Natural killer cell (primary cell): ENCODE measurements at regions of chr12 and their contacts with region 1.

Region 1: GRCh38 chr12:39372929-39373328 is 70.0 kb downstream of the KIF21A start:
- DNase-seq: peak; percentile 17 to 55
- ATAC-seq: peak; percentile 94 to 98 (median 98)
- H3K4me3 ChIP-seq: no peak overlapping the region
- H3K4me3 Mint-ChIP-seq: peak overlapping the region; percentile 86
- H3K27ac ChIP-seq: peak overlapping the region; percentile 71
- H3K27ac Mint-ChIP-seq: peak overlapping the region; percentile 85 to 91
- H3K4me1 ChIP-seq: peaks cover 10% of the 10 kb centered on the region
- H3K4me1 Mint-ChIP-seq: peaks cover 51 to 62% of the 10 kb centered on the region in 2 donors
- H3K27me3 ChIP-seq: no peaks in the 10 kb centered on the region
- H3K27me3 Mint-ChIP-seq: no peaks in the 10 kb centered on the region
- CTCF ChIP-seq: no peak

Region 2: DNA sequence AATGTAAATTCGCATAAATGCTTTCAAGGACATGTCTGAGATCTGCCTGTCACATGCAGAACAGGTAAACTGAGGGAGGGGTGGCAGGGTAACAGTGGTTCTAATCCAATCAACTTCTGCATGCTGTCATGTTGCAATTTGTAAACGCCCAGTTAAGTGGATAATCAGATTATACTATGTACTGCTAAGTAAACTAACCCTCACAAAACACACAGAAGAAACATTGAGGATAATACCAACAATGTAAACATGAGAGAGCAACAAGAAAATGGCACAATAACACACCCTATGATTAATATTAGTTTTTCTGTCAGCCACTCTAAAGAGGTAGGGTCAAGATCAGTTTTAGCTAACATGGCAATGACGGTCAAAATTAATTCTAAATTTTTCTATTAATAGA is 53.7 kb before region 1 on chr12:
- intact Hi-C with region 1: loop called (anchors 2 kb)
- DNase-seq: no peak
- ATAC-seq: no peak
- H3K4me3 ChIP-seq: no peak overlapping the region
- H3K4me3 Mint-ChIP-seq: no peak overlapping the region
- H3K27ac ChIP-seq: no peak overlapping the region
- H3K27ac Mint-ChIP-seq: no peak overlapping the region
- H3K4me1 ChIP-seq: no peaks in the 10 kb centered on the region
- H3K4me1 Mint-ChIP-seq: peaks cover 0 to 5% of the 10 kb centered on the region in 2 donors
- H3K27me3 ChIP-seq: no peaks in the 10 kb centered on the region
- H3K27me3 Mint-ChIP-seq: no peaks in the 10 kb centered on the region
- CTCF ChIP-seq: no peak

Region 3: DNA sequence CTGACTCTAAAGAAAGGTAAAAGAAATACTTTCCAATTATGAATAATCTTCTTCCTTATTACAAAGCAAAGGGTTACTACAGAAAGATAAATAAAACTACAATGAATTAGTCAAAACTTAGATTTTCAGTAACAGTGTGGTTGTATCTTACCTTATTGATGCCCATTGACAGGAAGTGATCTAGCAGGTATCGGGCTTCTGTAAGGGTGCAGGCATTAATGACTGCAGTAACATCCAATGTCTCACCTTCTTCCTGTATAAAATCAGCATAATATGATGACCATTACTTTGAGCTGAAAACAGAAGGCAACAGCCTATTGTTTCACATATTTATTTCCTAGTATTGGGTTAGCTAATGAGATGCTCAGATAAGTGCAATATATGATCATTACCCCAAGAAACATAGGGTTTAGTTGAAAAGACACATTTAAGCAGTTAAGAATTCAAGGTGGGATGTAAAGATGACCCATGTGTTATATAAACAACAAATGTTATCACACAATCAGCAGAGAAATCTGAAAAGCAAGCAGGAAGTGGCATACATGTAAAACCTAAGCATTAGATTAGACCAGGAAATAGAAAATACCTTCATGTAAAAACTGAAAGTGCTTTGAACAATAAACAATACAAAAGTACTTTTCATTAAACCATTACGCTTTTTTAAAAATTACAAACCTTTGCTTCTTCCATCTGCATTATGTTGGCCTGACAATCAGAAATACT is 41.2 kb before region 1 on chr12:
- intact Hi-C with region 1: loop called (anchors 5 kb)
- DNase-seq: peak in 1 of 2 donors; percentile 43
- ATAC-seq: peak; percentile 71 to 80 (median 78)
- H3K4me3 ChIP-seq: peak overlapping the region; percentile 8
- H3K4me3 Mint-ChIP-seq: peak overlapping the region; percentile 80
- H3K27ac ChIP-seq: peak overlapping the region; percentile 64
- H3K27ac Mint-ChIP-seq: peak overlapping the region; percentile 86 to 90
- H3K4me1 ChIP-seq: peaks cover 7% of the 10 kb centered on the region
- H3K4me1 Mint-ChIP-seq: peaks cover 23 to 29% of the 10 kb centered on the region in 2 donors
- H3K27me3 ChIP-seq: no peaks in the 10 kb centered on the region
- H3K27me3 Mint-ChIP-seq: no peaks in the 10 kb centered on the region
- CTCF ChIP-seq: no peak

Region 4: DNA sequence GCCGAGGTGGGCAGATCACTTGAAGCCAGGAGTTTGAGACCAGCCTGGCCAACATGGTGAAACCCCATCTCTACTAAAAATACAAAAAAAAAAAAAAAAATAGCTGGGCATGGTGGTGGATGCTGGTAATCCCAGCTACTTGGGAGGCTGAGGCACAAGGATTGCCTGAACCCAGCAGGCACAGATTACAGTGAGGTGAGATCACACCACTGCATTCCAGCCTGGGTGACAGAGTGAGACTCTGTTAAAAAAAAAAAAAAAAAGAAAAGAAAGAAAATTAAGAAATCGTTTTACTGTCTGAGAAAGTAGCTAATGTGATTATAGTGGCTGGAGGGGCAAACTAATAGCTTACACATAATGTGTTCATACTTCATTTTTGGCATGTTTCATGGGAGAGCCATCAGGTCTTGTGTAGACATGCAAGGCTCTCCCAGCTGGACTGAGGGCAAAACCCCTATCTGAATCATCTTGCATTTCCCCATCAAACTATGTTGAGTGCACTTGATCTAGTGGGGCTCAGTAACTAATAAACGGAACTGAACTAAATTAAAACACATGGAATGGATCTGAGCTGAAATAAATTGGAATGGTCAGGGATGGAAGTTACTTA is 53.8 kb after region 1 on chr12:
- intact Hi-C with region 1: no loop called
- DNase-seq: no peak
- ATAC-seq: no peak
- H3K4me3 ChIP-seq: no peak overlapping the region
- H3K4me3 Mint-ChIP-seq: no peak overlapping the region
- H3K27ac ChIP-seq: no peak overlapping the region
- H3K27ac Mint-ChIP-seq: peak overlapping the region in 1 of 2 donors; percentile 17
- H3K4me1 ChIP-seq: no peaks in the 10 kb centered on the region
- H3K4me1 Mint-ChIP-seq: peaks cover 10 to 18% of the 10 kb centered on the region in 2 donors
- H3K27me3 ChIP-seq: no peaks in the 10 kb centered on the region
- H3K27me3 Mint-ChIP-seq: no peaks in the 10 kb centered on the region
- CTCF ChIP-seq: no peak

Region 5: DNA sequence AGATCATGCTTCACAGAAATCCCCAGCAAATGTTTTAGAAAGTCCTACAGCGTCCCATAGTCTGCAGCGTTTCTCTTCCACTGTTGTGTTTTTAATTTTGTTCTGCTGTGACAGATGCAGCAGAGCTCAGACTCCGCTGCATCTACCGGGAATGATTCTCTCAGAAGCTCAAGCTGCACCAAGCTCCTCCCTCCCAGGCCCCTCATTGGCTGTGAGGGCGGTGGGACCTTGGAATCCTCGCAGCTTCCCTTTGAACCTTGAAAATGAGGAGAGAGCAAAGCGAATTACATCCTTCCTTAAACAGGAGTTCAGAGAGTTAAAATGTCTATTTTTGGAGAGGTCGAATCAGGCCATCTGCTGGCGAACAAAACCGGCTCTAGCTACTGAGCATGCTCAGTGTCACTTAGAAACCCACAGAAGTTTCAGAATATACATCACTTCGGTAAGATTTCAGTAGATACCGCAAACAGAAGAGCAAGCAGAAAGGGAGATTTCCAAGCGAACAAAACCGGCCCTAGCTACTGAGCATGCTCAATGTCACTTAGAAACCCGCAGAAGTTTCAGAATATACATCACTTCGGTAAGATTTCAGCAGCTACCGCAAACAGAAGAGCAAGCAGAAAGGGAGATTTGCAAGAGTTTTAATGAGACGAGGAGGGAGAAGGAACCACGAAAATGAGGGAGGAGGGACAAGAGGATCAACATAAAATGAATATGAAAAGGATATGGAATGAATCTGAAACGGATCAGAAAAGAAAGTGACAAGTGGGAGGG is 246.9 kb after region 1 on chr12 and contains the start of gene ABCD2:
- intact Hi-C with region 1: loop called (anchors 2 kb)
- DNase-seq: peak; percentile 38 to 94
- ATAC-seq: peak; percentile 89 to 93 (median 90)
- H3K4me3 ChIP-seq: peak within 1 kb of the TSS; percentile 60
- H3K4me3 Mint-ChIP-seq: no peak within 1 kb of the TSS
- H3K27ac ChIP-seq: peak within 1 kb of the TSS; percentile 85
- H3K27ac Mint-ChIP-seq: no peak within 1 kb of the TSS
- H3K4me1 ChIP-seq: peaks cover 14% of the 10 kb centered on the region
- H3K4me1 Mint-ChIP-seq: peaks cover 0 to 5% of the 10 kb centered on the region in 2 donors
- H3K27me3 ChIP-seq: no peaks in the 10 kb centered on the region
- H3K27me3 Mint-ChIP-seq: no peaks in the 10 kb centered on the region
- CTCF ChIP-seq: no peak
- total RNA-seq, gene ABCD2: 0.35 to 2.4 (median 0.75) TPM